Esophagus squamous epithelium (tissue), 5 donors: ENCODE measurements at regions of chr6 and their contacts with region 1.

Region 1: DNA sequence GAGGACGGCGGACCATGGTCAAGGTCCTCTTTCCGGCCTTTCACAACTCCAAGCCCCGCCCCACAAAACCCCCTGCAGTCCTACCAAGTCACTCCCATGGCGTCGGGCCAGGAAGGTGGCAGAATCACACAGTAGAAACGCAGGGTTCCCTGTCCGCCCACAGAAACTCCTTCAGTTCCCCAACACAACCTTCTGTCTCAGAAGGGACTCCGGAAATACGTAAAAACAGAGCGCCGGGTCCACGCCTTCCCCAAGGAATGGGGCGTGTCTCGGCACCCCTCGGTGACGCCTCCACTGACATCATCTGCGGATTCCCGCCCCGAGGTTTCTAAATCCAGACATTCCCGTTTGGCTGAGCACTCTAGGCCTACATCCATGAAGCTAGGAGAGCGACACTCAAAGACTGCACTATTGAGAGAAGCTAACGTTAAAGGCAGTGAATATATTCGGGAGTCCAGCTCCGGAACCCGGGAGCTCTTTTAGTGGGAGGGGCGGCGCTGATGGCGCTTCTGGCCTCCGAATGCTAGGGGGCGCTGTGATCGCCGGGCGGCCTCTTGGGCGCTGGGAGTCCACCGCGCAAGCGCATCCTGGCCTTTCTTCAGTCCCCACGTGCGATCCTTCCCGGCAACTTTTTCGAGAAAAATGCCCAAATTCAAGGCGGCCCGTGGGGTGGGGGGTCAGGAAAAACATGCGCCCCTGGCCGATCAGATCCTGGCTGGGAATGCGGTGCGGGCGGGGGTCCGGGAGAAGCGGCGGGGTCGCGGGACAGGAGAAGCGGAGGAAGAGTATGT is at the starts of genes BYSL and MED20:
- DNase-seq: peak; percentile 61
- H3K4me3 ChIP-seq: peak within 1 kb of the TSS; percentile 65 to 99 (median 82)
- H3K27ac ChIP-seq: peak within 1 kb of the TSS; percentile 97 to 99 (median 98)
- H3K4me1 ChIP-seq: peaks cover 23 to 63% (median 34%) of the 10 kb centered on the region in 3 donors
- H3K27me3 ChIP-seq: no peaks in the 10 kb centered on the region
- CTCF ChIP-seq: peak; percentile 93 to 99 (median 98)
- POLR2A ChIP-seq: peak in 3 of 4 donors; percentile 77 to 81 (median 80)
- total RNA-seq, gene BYSL: 6.3 to 19.4 (median 13.0) TPM
- total RNA-seq, gene MED20: 6.9 to 18.7 (median 15.0) TPM

Region 2: DNA sequence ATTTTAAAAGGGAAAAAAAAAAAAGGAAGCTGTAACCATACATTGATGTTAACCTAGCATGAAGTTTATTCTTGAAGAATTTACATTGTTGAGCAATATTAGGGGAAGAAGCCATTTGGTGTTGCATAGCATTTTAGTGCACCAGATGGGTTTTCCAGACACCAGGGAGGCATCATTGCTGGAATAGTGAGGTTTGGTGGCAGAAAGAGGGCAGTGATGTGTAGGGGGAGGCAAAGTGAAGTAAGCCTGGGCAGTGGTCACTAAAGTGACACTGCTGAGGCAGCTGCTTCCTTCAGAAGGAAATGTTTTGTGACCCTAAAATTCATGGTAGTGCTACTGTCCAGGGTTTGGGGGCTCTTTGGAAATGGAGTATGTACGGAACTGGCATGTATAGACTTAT is 131.1 kb before region 1 on chr6:
- intact Hi-C with region 1: loop called (anchors 10 kb)
- DNase-seq: no peak
- H3K4me3 ChIP-seq: no peak overlapping the region
- H3K27ac ChIP-seq: no peak overlapping the region
- H3K4me1 ChIP-seq: peaks cover 20 to 31% (median 21%) of the 10 kb centered on the region in 3 donors
- H3K27me3 ChIP-seq: no peaks in the 10 kb centered on the region
- CTCF ChIP-seq: no peak
- POLR2A ChIP-seq: no peak

Region 3: GRCh38 chr6:41970436-41970846 is 49.3 kb after region 1 on chr6:
- intact Hi-C with region 1: no loop called
- DNase-seq: no peak
- H3K4me3 ChIP-seq: no peak overlapping the region
- H3K27ac ChIP-seq: no peak overlapping the region
- H3K4me1 ChIP-seq: peaks cover 0 to 28% (median 7%) of the 10 kb centered on the region in 3 donors
- H3K27me3 ChIP-seq: no peaks in the 10 kb centered on the region
- CTCF ChIP-seq: no peak
- POLR2A ChIP-seq: no peak

Region 4: DNA sequence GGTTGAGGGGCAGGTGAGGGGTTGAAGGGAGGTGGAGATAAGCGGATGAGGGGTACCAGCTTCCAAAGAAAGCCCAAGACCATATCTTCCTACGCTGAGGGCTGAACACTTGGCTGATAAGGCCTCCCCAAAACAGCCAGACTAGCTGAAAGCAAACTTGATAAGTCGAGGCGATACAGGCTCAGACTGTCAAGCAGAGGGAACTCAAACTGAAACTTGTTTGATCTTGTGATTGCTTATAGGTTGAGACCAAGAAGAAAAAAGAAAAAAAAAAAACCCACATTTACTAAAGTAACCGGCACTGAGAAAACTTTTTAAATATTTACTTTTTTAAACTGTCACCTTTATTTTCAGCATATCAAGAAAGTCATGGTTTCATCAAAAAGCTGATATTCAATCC is 457.0 kb after region 1 on chr6:
- intact Hi-C with region 1: no loop called
- DNase-seq: no peak
- H3K4me3 ChIP-seq: no peak overlapping the region
- H3K27ac ChIP-seq: peak overlapping the region in 1 of 4 donors; percentile 29
- H3K4me1 ChIP-seq: peaks cover 0 to 50% (median 5%) of the 10 kb centered on the region in 3 donors
- H3K27me3 ChIP-seq: no peaks in the 10 kb centered on the region
- CTCF ChIP-seq: no peak
- POLR2A ChIP-seq: no peak

Region 5: GRCh38 chr6:42572523-42572922 is 651.4 kb after region 1 on chr6:
- intact Hi-C with region 1: no loop called
- DNase-seq: no peak
- H3K4me3 ChIP-seq: no peak overlapping the region
- H3K27ac ChIP-seq: no peak overlapping the region
- H3K4me1 ChIP-seq: peaks cover 5 to 65% (median 33%) of the 10 kb centered on the region in 3 donors
- H3K27me3 ChIP-seq: no peaks in the 10 kb centered on the region
- CTCF ChIP-seq: no peak
- POLR2A ChIP-seq: no peak